ENCODE measurements at regions of chr9 and their contacts with region 1.

Region 1: GRCh38 chr9:131125128-131126058 is at the start of gene NUP214:
- DNase-seq: peak; percentile 98
- H3K4me3 ChIP-seq: peak within 1 kb of the TSS; percentile 85 to 92
- H3K27ac ChIP-seq: peak within 1 kb of the TSS; percentile 66 to 74
- H3K4me1 ChIP-seq: peaks cover 10% of the 10 kb centered on the region in 2 experiments; a peak in 2 of 4 replicates
- H3K27me3 ChIP-seq: no peaks in the 10 kb centered on the region
- CTCF ChIP-seq: no peak
- EP300 ChIP-seq: no peak; a peak in 1 of 4 replicates
- RAD21 ChIP-seq: no peak
- polyA plus RNA-seq, gene NUP214: 7.6 and 8.0 TPM in 2 replicates

Region 2: GRCh38 chr9:131096269-131097125 is 28.9 kb before region 1 on chr9 and contains the start of gene AIF1L:
- CTCF ChIA-PET with region 1: interaction called, 3 read pairs
- POLR2A ChIA-PET with region 1: interaction called, 13 read pairs
- DNase-seq: peak; percentile 93
- H3K4me3 ChIP-seq: peak within 1 kb of the TSS; percentile 49 to 53
- H3K27ac ChIP-seq: no peak within 1 kb of the TSS
- H3K4me1 ChIP-seq: peaks cover 0 to 24% of the 10 kb centered on the region in 2 experiments; a peak in 1 of 4 replicates
- H3K27me3 ChIP-seq: peaks cover 27% of the 10 kb centered on the region
- CTCF ChIP-seq: no peak
- EP300 ChIP-seq: no peak
- RAD21 ChIP-seq: no peak
- polyA plus RNA-seq, gene AIF1L: 0.26 and 0.50 TPM in 2 replicates